Activated naive CD4-positive, alpha-beta T cell treated with anti-CD3 and anti-CD28 coated beads for 36 hours (primary cell): ENCODE measurements at regions of chr14 and their contacts with region 1.

Region 1: DNA sequence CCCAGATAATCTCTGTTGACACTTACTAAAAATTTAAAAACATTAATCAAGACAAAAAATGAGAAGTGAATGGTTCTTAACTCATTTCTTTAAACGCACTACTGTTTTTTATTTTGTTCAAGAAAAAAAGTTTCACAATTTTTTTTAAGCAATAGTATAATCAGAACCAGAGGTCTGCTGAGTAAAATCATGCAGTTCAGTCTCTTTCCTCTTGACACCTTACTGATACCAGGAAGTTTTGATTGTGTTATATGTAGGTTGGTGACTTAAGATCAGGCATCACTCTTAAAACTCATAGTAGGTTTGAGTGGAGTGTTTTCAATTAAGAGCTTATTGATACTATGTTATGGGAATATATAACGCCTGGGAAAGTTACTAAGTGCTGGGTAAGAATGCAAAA is 121.4 kb downstream of the TRMT5 start:
- DNase-seq: no peak
- H3K4me3 Mint-ChIP-seq: no peak overlapping the region
- H3K27ac Mint-ChIP-seq: no peak overlapping the region
- H3K4me1 Mint-ChIP-seq: peaks cover 14% of the 10 kb centered on the region
- H3K27me3 Mint-ChIP-seq: no peaks in the 10 kb centered on the region

Region 2: GRCh38 chr14:60965402-60965801 is 105.9 kb after region 1 on chr14:
- CTCF ChIA-PET with region 1: no interaction called
- intact Hi-C with region 1: loop called (anchors 1 kb)
- DNase-seq: peak; percentile 22
- H3K4me3 Mint-ChIP-seq: no peak overlapping the region
- H3K27ac Mint-ChIP-seq: no peak overlapping the region
- H3K4me1 Mint-ChIP-seq: peaks cover 13% of the 10 kb centered on the region
- H3K27me3 Mint-ChIP-seq: no peaks in the 10 kb centered on the region

Region 3: GRCh38 chr14:61620130-61620946 is 760.8 kb after region 1 on chr14:
- CTCF ChIA-PET with region 1: no interaction called
- intact Hi-C with region 1: no loop called
- DNase-seq: peak; percentile 85
- H3K4me3 Mint-ChIP-seq: no peak overlapping the region
- H3K27ac Mint-ChIP-seq: peak overlapping the region; percentile 89
- H3K4me1 Mint-ChIP-seq: peaks cover 80% of the 10 kb centered on the region
- H3K27me3 Mint-ChIP-seq: no peaks in the 10 kb centered on the region